AG04449 (cell line): ENCODE measurements at regions of chr12 and their contacts with region 1.

Region 1: GRCh38 chr12:53321074-53321814 is at the start of gene AAAS:
- DNase-seq: peak; percentile 72
- H3K4me3 ChIP-seq: peak within 1 kb of the TSS; percentile 97
- CTCF ChIP-seq: peak; percentile 99

Region 2: DNA sequence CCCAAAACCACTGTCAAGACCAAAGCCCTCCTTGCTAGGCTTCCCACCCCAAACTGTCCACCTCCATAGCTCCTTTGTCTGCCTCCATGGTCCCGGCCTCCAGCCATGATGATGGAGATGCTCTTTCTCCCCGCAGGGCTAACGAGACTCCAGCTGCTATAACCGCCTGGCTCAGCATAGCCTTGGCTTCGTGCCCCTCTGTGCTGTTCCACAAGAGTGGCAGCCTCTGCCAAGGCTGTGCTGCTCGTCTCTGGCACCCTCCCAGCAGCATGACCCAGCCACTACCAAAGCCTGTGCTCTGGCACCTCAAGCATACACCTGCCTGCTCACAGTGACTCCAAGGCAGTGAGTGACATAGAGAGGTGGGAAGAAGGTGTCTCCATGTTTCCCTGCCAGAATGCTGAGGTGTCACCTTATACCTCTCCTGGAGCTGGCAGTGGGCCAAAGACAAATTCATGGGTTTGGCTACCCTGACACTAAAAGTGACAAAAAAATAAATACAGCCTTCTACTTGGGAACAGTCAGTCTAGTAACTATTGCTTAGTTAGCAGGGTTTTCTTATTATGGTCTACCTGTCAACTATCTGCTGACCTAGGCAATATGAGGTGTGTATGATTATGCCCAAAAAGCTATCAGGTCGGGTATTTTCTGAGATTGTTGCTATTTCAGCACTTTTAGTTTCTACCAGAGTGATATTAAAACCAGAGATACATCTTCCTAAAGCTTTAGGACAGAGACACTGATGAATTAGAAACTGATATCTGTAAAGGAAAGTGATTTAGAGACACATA is 686.8 kb before region 1 on chr12:
- CTCF ChIA-PET with region 1: no interaction called
- POLR2A ChIA-PET with region 1: no interaction called
- DNase-seq: no peak
- H3K4me3 ChIP-seq: no peak overlapping the region
- CTCF ChIP-seq: no peak

Region 3: GRCh38 chr12:53065975-53066931 is 255.0 kb before region 1 on chr12:
- CTCF ChIA-PET with region 1: interaction called, 17 read pairs
- POLR2A ChIA-PET with region 1: no interaction called
- DNase-seq: no peak
- H3K4me3 ChIP-seq: no peak overlapping the region
- CTCF ChIP-seq: peak; percentile 85

Region 4: DNA sequence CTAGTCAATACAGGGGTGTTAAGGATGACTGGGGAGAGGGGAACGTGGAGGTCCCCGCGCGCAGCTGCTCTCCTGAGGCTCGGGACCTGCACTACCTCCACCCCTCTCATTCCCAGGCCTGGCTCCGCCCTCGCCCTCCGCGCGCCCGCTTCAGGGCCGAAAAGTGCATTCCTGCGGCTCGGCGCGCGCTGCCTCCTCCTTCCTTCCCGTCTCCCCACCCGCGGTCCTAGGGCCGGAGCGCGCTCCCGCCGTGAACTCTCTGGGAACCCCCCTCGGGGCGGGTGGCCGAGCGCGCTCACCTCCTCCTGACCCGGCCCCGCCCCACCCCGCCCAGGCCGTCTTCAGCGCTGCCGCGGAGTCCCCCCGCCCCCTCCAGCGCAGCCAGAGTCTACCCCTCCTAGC is 100.4 kb before region 1 on chr12:
- CTCF ChIA-PET with region 1: interaction called, 187 read pairs
- POLR2A ChIA-PET with region 1: interaction called, 4 read pairs
- DNase-seq: peak; percentile 28
- H3K4me3 ChIP-seq: peak overlapping the region; percentile 95
- CTCF ChIP-seq: no peak

Region 5: DNA sequence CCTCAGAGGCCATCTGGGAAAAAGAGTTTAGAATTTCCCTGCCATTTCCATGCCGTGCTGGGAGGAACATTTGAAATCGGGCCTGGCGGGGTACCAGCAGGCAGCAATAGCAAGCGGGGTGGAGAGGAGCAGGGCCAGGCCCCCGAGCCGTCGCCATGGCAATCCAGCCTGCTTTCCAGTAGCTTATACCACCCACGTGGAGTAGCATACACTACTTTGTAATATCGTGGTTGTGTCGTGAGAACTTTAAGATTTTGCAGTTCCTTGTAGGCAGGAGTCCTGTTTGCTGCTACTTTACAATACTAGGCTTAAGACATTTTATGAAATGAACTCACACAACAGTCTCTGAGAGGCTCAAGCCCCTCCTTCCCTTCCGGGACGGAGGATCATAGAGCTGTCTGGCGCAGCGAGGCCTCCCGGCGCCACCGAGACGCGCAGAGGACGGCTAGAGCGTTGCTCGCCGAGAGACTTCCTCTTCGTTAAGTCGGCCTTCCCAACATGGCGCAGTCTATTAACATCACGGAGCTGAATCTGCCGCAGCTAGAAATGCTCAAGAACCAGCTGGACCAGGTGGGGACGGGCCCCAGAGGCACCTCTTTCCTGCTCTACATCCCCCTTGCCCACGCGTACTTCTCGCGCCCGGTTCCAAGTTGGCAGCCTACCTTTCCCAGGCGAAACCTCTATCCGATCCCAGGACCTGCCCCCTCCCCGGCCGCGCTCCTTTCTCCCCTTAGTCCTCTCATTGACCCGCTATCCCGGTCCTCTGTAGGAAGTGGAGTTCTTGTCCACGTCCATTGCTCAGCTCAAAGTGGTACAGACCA is 26.0 kb before region 1 on chr12 and contains the start of gene PFDN5:
- CTCF ChIA-PET with region 1: interaction called, 120 read pairs
- POLR2A ChIA-PET with region 1: interaction called, 19 read pairs
- DNase-seq: peak; percentile 51
- H3K4me3 ChIP-seq: peak within 1 kb of the TSS; percentile 93
- CTCF ChIP-seq: peak; percentile 1

Region 6: GRCh38 chr12:53352331-53353256 is 31.4 kb after region 1 on chr12:
- CTCF ChIA-PET with region 1: interaction called, 391 read pairs
- POLR2A ChIA-PET with region 1: no interaction called
- DNase-seq: peak; percentile 29
- H3K4me3 ChIP-seq: no peak overlapping the region
- CTCF ChIP-seq: peak; percentile 84

Region 7: DNA sequence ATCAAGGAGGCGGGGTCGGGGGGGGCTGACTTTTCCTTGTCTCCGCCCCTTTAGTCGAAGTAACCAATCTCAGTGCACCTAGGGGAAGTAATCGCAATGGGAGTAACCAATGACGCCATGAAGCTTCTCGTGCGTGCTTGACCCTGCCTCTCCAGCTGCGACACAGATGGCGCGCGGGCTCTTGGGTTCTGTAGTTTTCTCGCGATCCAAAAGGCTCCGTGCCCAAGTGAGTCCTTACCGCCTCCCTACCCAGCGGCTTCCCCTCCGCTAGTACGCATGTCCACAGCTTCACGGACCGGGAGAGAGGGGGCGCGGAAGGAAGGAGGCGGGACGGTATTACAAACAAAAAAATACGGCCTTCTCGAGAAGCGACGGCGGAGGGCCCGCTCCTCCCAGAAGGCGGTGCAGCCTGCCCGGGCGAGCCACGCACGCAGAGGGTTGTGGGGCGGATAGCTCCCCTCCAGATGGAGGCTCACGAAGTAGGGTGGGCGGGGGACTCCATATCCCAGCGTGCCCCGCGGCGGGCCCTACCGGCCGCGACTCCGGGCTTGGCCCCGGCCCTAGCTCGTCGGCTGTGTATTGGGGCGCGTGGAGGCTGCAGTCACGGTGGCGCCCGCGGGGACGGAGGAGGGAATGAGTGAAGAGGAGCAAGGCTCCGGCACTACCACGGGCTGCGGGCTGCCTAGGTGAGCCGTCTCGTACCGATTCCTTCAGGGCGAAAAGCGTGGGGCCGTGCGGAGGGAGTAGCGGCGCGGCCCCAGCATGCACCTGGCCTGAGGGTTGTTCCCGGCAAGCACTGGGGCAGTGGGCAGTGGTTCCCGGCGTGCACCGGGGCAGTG is 179.8 kb after region 1 on chr12 and contains the start of gene TARBP2:
- CTCF ChIA-PET with region 1: interaction called, 135 read pairs
- POLR2A ChIA-PET with region 1: interaction called, 10 read pairs
- DNase-seq: peak; percentile 98
- H3K4me3 ChIP-seq: peak within 1 kb of the TSS; percentile 83
- CTCF ChIP-seq: no peak

Region 8: GRCh38 chr12:53524476-53524875 is 203.2 kb after region 1 on chr12:
- CTCF ChIA-PET with region 1: no interaction called
- POLR2A ChIA-PET with region 1: no interaction called
- DNase-seq: no peak
- H3K4me3 ChIP-seq: no peak overlapping the region
- CTCF ChIP-seq: no peak

Region 9: DNA sequence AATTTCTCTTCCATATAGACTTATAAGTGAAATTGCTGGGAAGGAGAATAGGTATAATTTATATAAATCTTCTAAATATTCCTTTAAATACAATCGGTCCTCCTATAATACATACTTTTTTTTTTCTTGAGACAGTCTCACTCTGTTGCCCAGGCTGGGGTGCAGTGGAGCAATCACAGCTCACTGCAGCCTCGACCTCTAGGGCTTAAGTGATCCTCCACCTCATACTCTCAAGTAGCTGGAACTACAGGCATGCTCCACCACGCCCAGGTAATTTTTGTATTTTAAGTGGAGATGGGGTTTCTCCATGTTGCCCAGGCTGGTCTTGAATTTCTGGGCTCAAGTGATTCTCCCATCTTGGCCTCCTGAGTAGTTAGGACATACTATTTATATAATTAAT is 215.7 kb after region 1 on chr12:
- CTCF ChIA-PET with region 1: no interaction called
- POLR2A ChIA-PET with region 1: no interaction called
- DNase-seq: no peak
- H3K4me3 ChIP-seq: no peak overlapping the region
- CTCF ChIP-seq: no peak